KBM-7 (cell line): ENCODE measurements at regions of chr2 and their contacts with region 1.

Region 1: DNA sequence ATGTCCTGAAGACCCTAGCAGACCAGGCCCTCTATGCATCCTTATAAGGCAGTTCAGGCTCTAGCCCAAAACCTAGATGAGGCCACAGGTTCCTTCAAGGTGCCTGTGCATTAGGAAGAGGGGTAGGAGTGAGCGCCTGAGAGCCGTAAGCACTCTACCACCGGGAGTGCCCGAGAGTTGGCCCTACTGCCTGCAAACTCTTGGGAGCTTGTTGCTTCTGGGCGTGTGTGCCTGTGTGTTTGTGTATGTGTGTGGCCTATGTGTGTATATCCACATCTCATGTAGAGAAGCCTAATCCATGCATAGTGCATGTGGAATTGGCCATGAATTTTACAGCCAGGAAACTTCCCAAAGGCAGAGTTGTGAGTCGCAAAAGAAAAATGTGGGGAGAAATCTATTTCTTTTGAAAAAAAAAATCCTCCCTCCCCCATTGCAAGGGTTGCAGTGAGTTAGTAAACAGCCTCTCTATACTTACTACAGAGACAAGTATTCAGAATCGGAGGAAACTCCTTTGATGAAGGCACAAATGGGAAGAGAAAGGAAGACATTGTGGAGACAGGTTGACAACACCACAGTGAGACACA is 96.8 kb downstream of the ADD2 start:
- DNase-seq: no peak

Region 2: GRCh38 chr2:70828914-70829824 is 158.0 kb after region 1 on chr2:
- in situ Hi-C with region 1: no loop called
- DNase-seq: no peak

Region 3: DNA sequence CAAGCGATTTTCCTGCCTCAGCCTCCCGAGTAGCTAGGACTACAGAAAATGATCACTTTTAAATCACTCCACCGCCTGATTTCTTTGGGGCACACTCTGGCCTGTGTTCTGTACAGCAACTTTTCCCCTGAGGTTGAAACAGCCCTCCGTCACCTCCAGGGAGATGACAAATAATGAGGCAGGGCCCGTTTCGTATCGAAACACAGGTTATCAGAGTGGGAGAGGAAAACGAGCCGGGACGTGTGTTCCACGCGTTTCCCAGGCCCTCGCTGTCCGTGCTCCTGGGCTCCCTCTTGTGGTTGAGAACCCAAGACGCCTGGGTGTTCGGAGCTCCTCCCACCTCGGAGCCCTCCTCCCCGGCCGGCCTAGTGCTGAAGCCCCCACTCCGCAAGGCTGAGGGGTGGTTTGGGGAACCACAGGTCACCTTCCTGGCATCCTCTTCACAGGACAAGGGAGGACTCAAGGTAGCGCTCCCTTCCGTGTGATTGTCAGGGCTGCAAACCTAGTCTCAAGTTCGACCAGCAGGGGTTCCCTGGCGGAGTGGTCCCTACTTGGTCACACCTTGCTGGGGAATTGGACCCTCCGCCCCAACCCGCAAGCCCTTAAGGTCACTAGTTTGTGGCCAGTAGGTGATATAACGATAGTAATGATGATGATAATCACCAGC is 277.3 kb after region 1 on chr2:
- in situ Hi-C with region 1: loop called (anchors 25 kb)
- DNase-seq: peak; percentile 79